ENCODE measurements at regions of chr1 and their contacts with region 1.

Region 1: DNA sequence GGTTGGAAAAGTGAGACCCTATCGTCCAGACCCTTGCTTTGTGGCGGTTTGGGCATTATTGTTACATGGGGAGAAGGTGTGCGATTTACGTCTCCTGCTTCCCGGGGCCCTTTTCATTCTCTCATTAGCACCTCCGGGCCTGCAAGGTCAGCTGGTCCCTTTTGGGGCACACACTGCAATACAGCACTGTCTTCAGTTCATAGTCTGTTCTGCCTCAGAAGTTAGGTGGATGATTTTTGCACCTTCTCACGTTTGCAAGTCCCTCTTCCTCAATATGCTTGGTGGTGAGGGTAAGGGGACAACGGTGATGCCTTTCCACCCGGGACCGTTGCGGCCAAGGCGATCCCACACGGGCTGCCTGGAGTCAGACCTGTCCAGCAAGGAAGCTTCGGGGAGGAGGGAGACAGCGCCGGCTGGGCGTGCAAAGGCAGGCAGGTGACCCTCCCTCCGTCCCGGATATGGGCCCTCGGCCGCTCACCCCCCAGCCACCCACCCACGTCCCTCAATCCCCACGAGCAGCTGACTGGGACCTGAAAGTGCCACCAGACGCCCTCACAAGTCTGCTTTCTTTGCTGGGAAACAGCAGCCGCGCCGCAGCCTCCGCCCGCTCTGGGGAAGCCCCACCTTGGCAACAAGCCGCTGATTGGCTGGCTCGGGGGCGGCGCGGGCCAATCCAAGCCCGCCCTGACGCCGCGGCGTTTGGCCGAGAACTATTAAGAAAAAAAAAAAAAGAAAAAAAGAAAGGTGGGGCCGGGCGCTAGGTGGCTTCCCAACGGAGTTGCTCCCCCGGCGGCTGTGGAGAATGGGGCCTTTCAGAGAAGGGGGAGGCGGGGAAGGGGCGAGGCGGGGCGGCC is 21.7 kb downstream of the BTG2 start:
- DNase-seq: peak; percentile 75
- ATAC-seq: peak; percentile 93
- H3K4me3 ChIP-seq: peak overlapping the region; percentile 58 to 68
- H3K27ac ChIP-seq: peak overlapping the region; percentile 79
- H3K4me1 ChIP-seq: peaks cover 11 to 18% of the 10 kb centered on the region in 2 experiments; a peak in 3 of 4 replicates
- H3K27me3 ChIP-seq: peaks cover 9% of the 10 kb centered on the region; the same call in 1 of the 2 replicates
- CTCF ChIP-seq: no peak
- POLR2A ChIP-seq: no peak
- RAD21 ChIP-seq: no peak

Region 2: DNA sequence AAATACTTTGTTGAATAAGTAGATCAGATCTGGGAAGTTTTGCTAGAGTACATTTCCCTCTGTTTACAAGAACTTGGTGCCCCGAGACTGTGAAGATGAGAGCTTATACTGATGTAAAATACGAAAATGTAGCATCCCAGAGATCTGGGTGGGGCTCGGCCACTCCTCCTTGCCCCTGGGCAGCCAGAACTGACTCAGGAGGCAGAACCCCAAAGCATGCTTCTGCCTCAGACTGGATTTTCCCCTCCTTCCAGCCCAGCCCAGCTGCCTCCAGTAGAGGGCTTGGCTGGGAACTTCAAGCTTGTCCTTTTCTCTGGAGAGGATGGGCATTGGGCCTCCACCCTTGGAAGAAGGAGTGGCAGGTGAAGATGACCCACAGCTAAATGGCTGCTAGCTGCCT is 46.1 kb before region 1 on chr1:
- CTCF ChIA-PET with region 1: no interaction called
- POLR2A ChIA-PET with region 1: no interaction called
- RAD21 ChIA-PET with region 1: no interaction called
- intact Hi-C with region 1: loop called (anchors 2 kb)
- DNase-seq: no peak
- ATAC-seq: peak; percentile 86
- H3K4me3 ChIP-seq: no peak overlapping the region
- H3K27ac ChIP-seq: no peak overlapping the region
- H3K4me1 ChIP-seq: peaks cover 0 to 6% of the 10 kb centered on the region in 2 experiments; a peak in 2 of 4 replicates
- H3K27me3 ChIP-seq: no peaks in the 10 kb centered on the region
- CTCF ChIP-seq: peak in 1 of 3 experiments; percentile 29; a peak in 2 of 6 replicates
- POLR2A ChIP-seq: no peak
- RAD21 ChIP-seq: no peak

Region 3: GRCh38 chr1:203304919-203305808 is 21.9 kb before region 1 on chr1 and contains the start of gene BTG2:
- CTCF ChIA-PET with region 1: no interaction called
- POLR2A ChIA-PET with region 1: interaction called, 15 read pairs
- RAD21 ChIA-PET with region 1: no interaction called
- intact Hi-C with region 1: no loop called
- DNase-seq: peak; percentile 66
- ATAC-seq: peak; percentile 89
- H3K4me3 ChIP-seq: peak within 1 kb of the TSS; percentile 89 to 97
- H3K27ac ChIP-seq: peak within 1 kb of the TSS; percentile 89
- H3K4me1 ChIP-seq: peaks cover 12 to 29% of the 10 kb centered on the region in 2 experiments; a peak in 3 of 4 replicates
- H3K27me3 ChIP-seq: no peaks in the 10 kb centered on the region
- CTCF ChIP-seq: no peak
- POLR2A ChIP-seq: peak; percentile 98
- RAD21 ChIP-seq: no peak
- total RNA-seq, gene BTG2: 24.2 TPM

Measured in HCT116 (cell line).